OCI-LY7 (cell line): ENCODE measurements at regions of chr1 and their contacts with region 1.

Region 1: GRCh38 chr1:62407405-62408009 is 29.3 kb upstream of the USP1 start:
- DNase-seq: peak; percentile 61
- H3K4me3 ChIP-seq: no peak overlapping the region
- H3K27ac ChIP-seq: no peak overlapping the region
- H3K4me1 ChIP-seq: no peaks in the 10 kb centered on the region
- CTCF ChIP-seq: peak; percentile 93

Region 2: GRCh38 chr1:62175568-62176179 is 231.8 kb before region 1 on chr1:
- CTCF ChIA-PET with region 1: no interaction called
- POLR2A ChIA-PET with region 1: no interaction called
- intact Hi-C with region 1: loop called (anchors 1 kb)
- DNase-seq: peak; percentile 44
- H3K4me3 ChIP-seq: no peak overlapping the region
- H3K27ac ChIP-seq: no peak overlapping the region
- H3K4me1 ChIP-seq: no peaks in the 10 kb centered on the region
- CTCF ChIP-seq: peak; percentile 87

Region 3: DNA sequence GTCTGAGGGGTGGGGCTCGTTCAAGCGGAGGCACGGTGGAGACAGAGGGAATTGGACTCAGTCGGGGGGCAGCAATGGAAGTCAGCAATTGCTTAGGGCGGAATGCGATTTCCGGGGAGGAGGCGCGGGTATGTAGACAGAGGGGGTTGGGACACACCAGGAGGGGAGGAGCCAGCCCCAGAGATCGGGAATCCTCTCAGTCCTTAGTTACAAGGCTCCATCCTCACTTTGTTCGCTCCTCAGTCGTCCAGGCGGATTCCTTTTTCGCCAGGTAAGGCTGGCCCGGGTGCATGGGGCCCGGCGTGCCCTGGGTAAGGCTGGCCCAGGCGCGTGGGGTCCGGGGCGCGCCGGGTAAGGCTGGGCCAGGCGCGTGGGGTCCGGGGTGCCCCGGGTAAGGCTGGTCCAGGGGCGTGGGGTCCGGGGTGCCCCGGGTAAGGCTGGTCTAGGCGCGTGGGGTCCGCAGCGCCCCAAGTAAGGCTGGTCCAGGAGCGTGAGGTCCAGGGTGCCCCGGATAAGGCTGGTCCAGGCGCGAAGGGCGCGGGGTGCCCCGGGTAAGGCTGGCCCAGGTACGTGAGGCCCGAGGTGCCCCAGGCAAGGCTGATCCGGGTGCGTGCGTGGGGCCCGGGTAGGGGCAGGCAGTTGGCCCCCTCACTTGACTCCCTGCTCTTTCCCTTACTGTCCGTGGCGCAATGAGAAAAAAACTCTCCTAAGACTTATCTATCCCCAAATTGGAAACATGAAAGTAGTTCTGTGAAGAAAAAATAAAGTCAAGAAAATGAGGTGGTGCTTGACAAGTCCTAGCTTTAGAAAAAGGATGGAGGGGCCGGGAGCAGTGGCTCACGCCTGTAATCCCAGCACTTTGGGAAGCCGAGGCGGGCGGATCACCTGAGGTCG is 212.6 kb before region 1 on chr1 and contains the start of gene L1TD1:
- CTCF ChIA-PET with region 1: no interaction called
- POLR2A ChIA-PET with region 1: no interaction called
- intact Hi-C with region 1: no loop called
- DNase-seq: no peak
- H3K4me3 ChIP-seq: no peak within 1 kb of the TSS
- H3K27ac ChIP-seq: no peak within 1 kb of the TSS
- H3K4me1 ChIP-seq: no peaks in the 10 kb centered on the region
- CTCF ChIP-seq: no peak
- total RNA-seq, gene L1TD1: not detected in 2 replicates

Region 4: GRCh38 chr1:62295921-62296491 is 111.5 kb before region 1 on chr1:
- CTCF ChIA-PET with region 1: no interaction called
- POLR2A ChIA-PET with region 1: no interaction called
- intact Hi-C with region 1: loop called (anchors 10 kb)
- DNase-seq: no peak
- H3K4me3 ChIP-seq: no peak overlapping the region
- H3K27ac ChIP-seq: no peak overlapping the region
- H3K4me1 ChIP-seq: no peaks in the 10 kb centered on the region
- CTCF ChIP-seq: no peak